ENCODE measurements at regions of chr9 and their contacts with region 1.

Region 1: DNA sequence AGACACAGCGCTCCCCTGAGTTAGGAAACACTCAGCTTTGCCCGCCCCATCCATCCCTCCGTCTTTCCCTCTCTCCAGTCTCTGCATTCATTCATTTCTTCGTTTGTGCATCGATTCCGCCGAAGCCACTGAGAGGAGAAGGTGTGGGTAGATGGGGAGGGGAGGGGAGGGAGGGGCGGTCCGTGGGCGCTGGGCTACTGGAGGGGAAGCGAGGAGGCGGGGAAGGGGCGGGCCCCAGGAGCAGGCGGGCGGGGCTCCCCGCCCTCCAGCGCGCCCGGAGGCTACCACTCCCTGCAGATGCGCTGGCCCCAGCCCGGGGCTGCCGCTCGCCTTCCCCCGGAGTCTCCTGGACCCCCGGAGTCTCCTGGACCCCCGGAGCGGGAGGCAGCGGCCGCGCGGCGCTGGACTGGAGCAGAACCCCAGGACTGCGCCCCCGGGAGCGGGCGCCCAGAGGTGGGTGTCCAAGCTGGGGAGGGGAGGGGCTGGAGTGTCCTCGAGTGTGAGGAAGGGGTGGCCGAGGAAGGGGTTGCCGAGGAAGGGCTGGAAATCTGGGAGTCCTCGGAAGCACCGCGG is 159.5 kb downstream of the C9orf152 start:
- DNase-seq: peak; percentile 94
- H3K4me3 ChIP-seq: peak overlapping the region; percentile 71 to 82 (median 78)
- H3K27ac ChIP-seq: peak overlapping the region; percentile 78 to 83 (median 80)
- H3K4me1 ChIP-seq: peaks cover 13 to 40% (median 37%) of the 10 kb centered on the region in 4 donors
- H3K27me3 ChIP-seq: no peaks in the 10 kb centered on the region
- CTCF ChIP-seq: no peak
- EP300 ChIP-seq: no peak
- POLR2A ChIP-seq: peak; percentile 52

Region 2: DNA sequence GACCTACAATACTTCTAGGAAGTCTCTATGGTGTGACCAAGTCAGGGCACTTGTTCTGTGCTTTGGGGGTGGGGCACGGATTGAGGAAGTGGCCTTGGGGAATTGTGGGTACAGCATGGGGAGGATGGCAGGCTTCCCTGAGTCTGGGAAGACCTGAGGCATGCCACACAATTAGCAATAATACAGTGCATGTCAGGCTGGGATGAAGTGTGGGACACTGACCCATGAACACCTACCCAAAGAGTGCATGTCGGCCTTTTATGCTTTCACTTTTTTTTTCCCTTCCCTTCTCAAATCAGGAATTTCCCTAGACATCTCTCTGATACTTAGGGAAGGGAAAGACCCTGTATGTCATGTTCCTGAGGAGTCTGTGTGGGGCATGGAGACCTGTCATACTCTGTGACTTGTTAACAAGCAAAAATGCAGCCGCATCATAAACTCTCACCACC is 122.0 kb before region 1 on chr9:
- intact Hi-C with region 1: no loop called
- DNase-seq: no peak
- H3K4me3 ChIP-seq: no peak overlapping the region
- H3K27ac ChIP-seq: no peak overlapping the region
- H3K4me1 ChIP-seq: peaks cover 0 to 10% (median 5%) of the 10 kb centered on the region in 4 donors
- H3K27me3 ChIP-seq: no peaks in the 10 kb centered on the region
- CTCF ChIP-seq: no peak
- EP300 ChIP-seq: no peak
- POLR2A ChIP-seq: no peak

Region 3: DNA sequence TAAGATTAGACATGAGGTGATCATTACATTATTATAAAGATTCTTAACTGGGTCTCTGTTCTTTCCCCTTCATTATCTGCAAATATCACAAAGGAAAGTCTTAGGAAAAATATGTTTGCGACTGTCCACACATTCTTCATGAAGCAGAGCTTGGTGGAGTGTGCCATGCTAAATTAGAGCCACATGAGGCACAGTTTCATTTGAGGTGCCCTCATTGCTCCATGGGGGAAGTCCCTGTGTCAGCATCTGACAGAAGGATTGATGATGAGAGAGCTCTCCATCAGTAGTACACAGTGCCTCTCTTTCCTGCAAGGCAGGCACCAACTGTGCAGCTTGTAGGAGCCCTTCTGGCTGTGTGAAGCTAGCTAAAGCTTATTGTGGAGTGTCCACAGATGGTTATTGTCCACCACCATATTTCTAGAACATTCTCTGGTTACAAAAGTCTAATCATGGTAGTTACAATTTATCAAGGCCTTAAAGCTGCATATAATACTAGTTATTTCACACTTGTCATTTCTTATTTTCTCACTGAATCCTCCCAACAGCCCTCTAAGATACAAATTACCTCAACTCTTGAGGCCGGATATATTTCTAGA is 95.6 kb after region 1 on chr9:
- intact Hi-C with region 1: loop called (anchors 5 kb)
- DNase-seq: no peak
- H3K4me3 ChIP-seq: no peak overlapping the region
- H3K27ac ChIP-seq: peak overlapping the region in 3 of 4 donors; percentile 8 to 61 (median 24)
- H3K4me1 ChIP-seq: peaks cover 62 to 83% (median 76%) of the 10 kb centered on the region in 4 donors
- H3K27me3 ChIP-seq: no peaks in the 10 kb centered on the region
- CTCF ChIP-seq: no peak
- EP300 ChIP-seq: no peak
- POLR2A ChIP-seq: no peak

Region 4: GRCh38 chr9:110152704-110153374 is 104.3 kb after region 1 on chr9:
- intact Hi-C with region 1: loop called (anchors 5 kb)
- DNase-seq: no peak
- H3K4me3 ChIP-seq: no peak overlapping the region
- H3K27ac ChIP-seq: peak overlapping the region in 2 of 4 donors; percentile 24 to 38
- H3K4me1 ChIP-seq: peaks cover 60 to 76% (median 69%) of the 10 kb centered on the region in 4 donors
- H3K27me3 ChIP-seq: no peaks in the 10 kb centered on the region
- CTCF ChIP-seq: peak; percentile 64 to 76 (median 69)
- EP300 ChIP-seq: no peak
- POLR2A ChIP-seq: no peak

Measured in esophagus muscularis mucosa (tissue), 4 donors.